Activated T-helper 2 cell treated with anti-CD3 and anti-CD28 coated beads, Interferon-gamma antibody, Interleukin-2, Interleukin-4, amounts not matched to agents 10 μg/mL and 5 μg/mL and 100 μg/mL, durations not matched to agents 14 hours and 24 hours and 36 hours (primary cell): ENCODE measurements at regions of chr15 and their contacts with region 1.

Region 1: DNA sequence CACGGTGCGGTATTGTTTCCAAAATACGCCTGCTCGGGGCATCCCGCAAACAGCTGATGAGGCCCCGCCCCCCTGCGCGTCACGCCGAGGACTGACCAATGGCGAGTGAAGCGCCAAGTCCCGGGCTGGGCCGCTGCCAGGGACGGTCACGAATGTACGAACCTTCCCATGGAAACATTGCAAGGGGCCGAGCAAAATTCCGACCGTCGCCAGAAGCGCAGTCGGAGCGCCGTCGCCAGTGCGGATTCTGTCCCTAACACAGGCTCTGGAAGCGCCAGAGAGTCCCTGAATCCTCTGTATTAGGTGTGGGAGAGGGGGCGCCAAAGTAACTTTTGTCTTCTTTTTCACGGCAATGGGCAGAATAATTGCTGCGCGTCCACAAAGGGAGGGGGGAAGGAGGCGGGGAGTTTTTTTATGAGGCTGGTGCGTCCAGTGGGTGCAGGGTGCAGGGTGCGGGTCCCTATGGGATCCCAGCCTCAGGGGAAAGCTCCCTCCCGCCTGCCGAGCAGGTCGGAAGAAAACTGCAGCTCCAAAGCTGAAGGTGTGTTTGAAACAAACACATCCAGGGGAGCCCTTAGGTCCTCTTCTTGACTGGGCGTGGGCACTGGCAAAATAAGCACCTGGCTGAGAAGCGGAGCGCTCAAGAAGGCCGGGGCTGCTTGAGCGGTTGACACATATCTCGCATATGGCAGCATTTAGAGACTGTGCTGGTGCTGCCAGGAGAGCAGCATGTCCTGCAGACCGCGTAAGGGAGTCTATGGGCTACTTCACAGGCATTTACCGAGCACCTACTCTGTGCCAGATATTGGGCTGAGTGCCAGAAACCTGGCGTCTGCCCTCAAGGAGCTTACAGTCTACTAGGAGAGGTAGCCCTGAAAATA is at the start of gene BMF:
- DNase-seq: peak; percentile 95
- H3K4me3 Mint-ChIP-seq: peak within 1 kb of the TSS; percentile 85
- H3K27ac Mint-ChIP-seq: peak within 1 kb of the TSS; percentile 82
- H3K4me1 Mint-ChIP-seq: peaks cover 54% of the 10 kb centered on the region
- H3K27me3 Mint-ChIP-seq: peaks cover 5% of the 10 kb centered on the region
- total RNA-seq, gene BMF: 16.1 and 17.9 TPM in 2 replicates

Region 2: DNA sequence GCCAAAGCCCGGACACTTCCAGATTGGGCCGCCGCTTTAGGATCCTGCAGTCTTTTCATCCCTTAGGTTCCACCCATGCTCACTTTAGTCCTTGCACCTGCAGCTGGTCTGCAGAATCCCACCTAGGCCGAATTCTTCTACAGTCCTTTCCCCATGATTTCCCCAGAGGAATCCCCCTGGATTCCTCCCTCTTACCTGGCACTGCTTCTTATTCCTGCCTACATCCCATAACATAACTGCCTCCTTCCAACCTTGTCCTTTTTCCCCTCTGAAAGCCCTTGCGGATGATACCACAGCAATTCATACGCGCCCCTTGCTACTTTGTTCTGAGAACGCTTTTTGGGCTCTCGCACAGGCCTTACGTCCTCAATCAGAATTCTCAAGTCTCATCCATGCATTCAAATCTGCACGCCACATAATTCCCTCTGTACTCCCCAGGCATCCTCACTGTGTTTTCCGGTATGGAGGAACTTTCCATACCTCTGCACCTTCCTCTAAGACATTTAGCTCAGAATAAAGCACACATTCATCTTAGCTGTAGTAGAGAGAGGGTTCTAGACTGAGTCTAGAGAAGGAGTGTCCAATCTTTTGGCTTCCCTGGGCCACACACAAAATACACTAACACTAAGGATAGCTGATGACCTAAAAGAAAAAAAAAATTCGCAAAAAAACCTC is 174.6 kb before region 1 on chr15:
- intact Hi-C with region 1: loop called (anchors 5 kb)
- DNase-seq: no peak
- H3K4me3 Mint-ChIP-seq: peak overlapping the region; percentile 90
- H3K27ac Mint-ChIP-seq: peak overlapping the region; percentile 67
- H3K4me1 Mint-ChIP-seq: peaks cover 36% of the 10 kb centered on the region
- H3K27me3 Mint-ChIP-seq: peaks cover 1% of the 10 kb centered on the region

Region 3: DNA sequence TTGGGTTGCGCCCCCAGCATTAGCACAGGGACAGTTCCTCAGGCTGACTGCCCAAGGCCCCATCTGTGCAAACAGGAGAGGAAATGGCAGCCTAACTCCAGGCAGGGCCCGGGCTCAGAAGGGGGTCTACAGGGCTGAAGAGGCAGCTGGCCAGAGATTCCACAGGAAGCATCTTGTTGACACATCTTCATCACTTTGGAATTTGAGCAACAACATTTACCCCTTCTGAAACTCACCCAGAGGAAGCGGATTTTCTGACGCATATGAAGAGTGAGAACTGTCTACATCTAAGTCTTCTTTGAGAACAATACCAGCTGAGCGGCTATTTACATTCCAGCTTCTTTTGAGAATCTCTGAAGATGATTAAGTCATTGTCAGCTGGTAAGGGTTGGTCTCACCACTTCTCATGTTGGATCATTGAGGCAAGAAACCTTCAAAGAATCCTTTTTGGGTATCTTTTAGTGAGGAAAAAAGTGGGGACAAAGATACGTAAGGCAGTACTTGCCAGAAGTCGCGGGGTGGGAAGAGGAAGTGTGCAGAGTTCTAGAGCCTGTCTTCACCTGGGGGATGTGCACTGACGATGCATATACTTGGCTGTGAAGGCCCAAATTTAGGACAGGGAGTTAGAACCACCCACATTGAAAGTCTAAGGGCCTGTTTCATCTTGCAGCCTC is 44.7 kb before region 1 on chr15:
- intact Hi-C with region 1: loop called (anchors 1 kb)
- DNase-seq: no peak
- H3K4me3 Mint-ChIP-seq: peak overlapping the region; percentile 31
- H3K27ac Mint-ChIP-seq: peak overlapping the region; percentile 64
- H3K4me1 Mint-ChIP-seq: peaks cover 18% of the 10 kb centered on the region
- H3K27me3 Mint-ChIP-seq: no peaks in the 10 kb centered on the region

Region 4: GRCh38 chr15:40092256-40092978 is 16.7 kb before region 1 on chr15:
- intact Hi-C with region 1: no loop called
- DNase-seq: no peak
- H3K4me3 Mint-ChIP-seq: no peak overlapping the region
- H3K27ac Mint-ChIP-seq: no peak overlapping the region
- H3K4me1 Mint-ChIP-seq: peaks cover 31% of the 10 kb centered on the region
- H3K27me3 Mint-ChIP-seq: no peaks in the 10 kb centered on the region

Region 5: GRCh38 chr15:40128766-40129660 is 19.9 kb after region 1 on chr15:
- intact Hi-C with region 1: loop called (anchors 2 kb)
- DNase-seq: no peak
- H3K4me3 Mint-ChIP-seq: no peak overlapping the region
- H3K27ac Mint-ChIP-seq: no peak overlapping the region
- H3K4me1 Mint-ChIP-seq: no peaks in the 10 kb centered on the region
- H3K27me3 Mint-ChIP-seq: no peaks in the 10 kb centered on the region

Region 6: DNA sequence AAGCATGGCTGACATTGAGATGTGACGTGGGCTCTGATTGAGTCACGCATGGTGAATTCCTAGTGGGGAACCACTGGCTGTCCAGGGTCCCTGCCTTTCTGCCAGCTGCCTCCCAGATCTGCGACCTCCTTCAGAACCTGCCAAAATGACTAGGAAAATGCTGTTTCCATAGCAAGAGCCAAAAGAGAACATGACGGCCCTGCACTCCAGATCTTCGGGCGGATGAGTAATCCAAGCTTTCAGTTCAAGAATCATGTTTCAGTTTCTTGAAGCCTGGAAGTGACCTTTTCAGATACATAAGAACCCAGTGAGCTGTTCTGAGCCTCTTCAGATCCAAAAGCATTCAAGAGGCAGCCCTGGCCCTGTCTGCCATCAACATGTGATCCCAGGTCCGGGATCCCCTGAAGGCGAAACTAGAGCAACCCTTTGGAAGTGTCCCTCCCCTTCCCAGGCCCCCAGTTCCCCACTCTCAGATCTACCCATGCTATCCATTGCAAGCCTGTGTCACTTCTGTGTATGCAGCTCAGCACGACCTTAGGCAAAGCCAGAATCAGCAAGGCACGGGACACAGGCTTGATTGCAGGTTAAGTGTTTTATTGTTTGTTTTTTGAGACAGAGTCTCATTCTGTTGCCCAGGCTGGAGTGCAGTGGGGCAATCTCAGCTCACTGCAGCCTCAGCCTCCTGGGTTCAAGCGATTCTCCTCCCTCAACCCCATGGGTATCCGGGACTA is 154.1 kb after region 1 on chr15:
- intact Hi-C with region 1: no loop called
- DNase-seq: no peak
- H3K4me3 Mint-ChIP-seq: no peak overlapping the region
- H3K27ac Mint-ChIP-seq: no peak overlapping the region
- H3K4me1 Mint-ChIP-seq: peaks cover 2% of the 10 kb centered on the region
- H3K27me3 Mint-ChIP-seq: peaks cover 16% of the 10 kb centered on the region

Region 7: GRCh38 chr15:40274350-40275274 is 165.5 kb after region 1 on chr15:
- intact Hi-C with region 1: loop called (anchors 10 kb)
- DNase-seq: peak; percentile 82
- H3K4me3 Mint-ChIP-seq: no peak overlapping the region
- H3K27ac Mint-ChIP-seq: no peak overlapping the region
- H3K4me1 Mint-ChIP-seq: peaks cover 8% of the 10 kb centered on the region
- H3K27me3 Mint-ChIP-seq: peaks cover 32% of the 10 kb centered on the region

Region 8: DNA sequence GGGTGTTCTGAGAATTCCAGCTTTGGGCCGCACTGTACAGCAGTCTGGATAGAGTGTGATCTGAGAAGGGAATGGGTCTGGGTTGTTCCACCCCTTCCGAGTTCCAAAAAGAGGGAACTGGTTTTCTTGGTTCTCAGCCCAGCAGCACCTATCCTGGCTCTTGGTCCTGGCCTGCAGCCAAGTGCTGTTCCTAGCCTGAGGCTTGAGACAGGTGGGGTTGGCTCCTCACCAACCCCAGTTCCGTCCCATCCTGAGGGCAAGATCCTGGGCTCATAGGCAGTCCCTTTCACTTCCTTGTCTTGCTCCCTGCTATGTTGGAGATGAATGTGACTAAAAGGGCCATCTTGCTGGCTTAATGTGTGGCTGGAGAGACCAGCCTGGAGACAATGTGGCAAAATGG is 311.7 kb after region 1 on chr15:
- intact Hi-C with region 1: no loop called
- DNase-seq: no peak
- H3K4me3 Mint-ChIP-seq: no peak overlapping the region
- H3K27ac Mint-ChIP-seq: no peak overlapping the region
- H3K4me1 Mint-ChIP-seq: no peaks in the 10 kb centered on the region
- H3K27me3 Mint-ChIP-seq: no peaks in the 10 kb centered on the region